SK-N-SH (cell line): ENCODE measurements at regions of chr3 and their contacts with region 1.

Region 1: DNA sequence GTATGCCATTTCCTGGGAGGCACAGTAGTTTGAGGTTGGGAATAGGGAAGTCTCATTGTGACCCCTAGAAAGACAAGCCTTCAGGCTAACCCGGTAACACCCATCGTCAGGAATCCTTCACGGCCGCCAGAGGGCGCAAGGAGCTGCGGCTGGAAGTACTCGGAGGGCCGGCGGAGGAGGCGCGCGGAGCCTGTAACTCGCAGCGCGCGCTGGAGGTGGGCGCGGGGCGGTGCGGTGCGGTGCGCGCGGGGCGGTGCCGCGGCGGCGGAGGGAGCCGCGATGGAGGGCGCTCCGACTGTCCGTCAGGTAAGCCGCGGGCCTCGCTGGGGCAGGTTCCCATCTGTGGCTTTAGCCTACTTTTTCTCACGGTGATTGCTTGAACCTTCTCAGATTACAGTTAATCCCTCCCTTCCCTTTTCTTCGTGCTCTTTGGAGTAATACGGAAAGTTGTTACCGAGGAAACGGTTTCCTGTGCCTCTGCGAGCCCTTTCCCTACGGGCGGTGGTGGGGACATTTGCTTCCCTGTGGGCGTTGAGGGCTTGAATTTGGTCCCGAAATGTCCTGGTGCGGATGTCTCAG is at the start of gene GRAMD1C:
- DNase-seq: peak; percentile 91
- H3K4me3 ChIP-seq: peak within 1 kb of the TSS; percentile 57 to 81
- H3K27ac ChIP-seq: peak within 1 kb of the TSS in 1 of 2 experiments; percentile 43; a peak in 2 of 4 replicates
- H3K4me1 ChIP-seq: no peaks in the 10 kb centered on the region; a peak in 1 of 4 replicates
- H3K27me3 ChIP-seq: no peaks in the 10 kb centered on the region
- CTCF ChIP-seq: peak; percentile 94
- EP300 ChIP-seq: no peak
- RAD21 ChIP-seq: peak; percentile 70
- polyA plus RNA-seq, gene GRAMD1C: 1.2 and 1.3 TPM in 2 replicates

Region 2: DNA sequence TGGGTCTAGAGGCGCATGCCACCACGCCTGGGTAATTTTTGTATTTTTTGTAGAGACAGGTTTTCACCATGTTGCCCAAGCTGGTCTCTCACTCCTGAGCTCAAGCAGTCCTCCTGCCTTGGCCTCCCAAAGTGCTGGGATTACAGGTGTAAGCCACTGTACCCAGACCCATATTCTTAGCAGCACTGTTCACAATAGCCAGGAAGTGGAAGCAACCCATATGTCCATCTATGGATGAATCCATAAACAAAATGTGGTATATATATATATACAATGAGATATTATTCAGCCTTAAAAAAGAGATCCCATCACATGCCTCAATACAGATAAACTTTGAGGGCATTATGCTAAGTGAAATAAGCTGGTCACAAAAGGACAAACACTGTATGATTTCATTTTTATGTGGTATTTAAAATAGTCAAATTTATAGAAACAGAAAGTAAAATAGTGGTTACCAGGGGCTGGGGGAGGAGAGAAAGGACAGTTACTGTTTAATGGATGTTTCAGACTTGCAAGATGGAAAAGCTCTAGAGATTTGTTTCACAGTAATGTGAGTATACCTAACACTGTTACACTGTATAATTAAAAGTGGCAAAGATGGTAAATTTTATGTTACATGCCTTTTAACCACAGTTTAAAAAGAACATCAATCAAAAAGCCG is 35.8 kb before region 1 on chr3:
- CTCF ChIA-PET with region 1: no interaction called
- POLR2A ChIA-PET with region 1: no interaction called
- DNase-seq: no peak
- H3K4me3 ChIP-seq: no peak overlapping the region
- H3K27ac ChIP-seq: no peak overlapping the region
- H3K4me1 ChIP-seq: no peaks in the 10 kb centered on the region
- H3K27me3 ChIP-seq: no peaks in the 10 kb centered on the region
- CTCF ChIP-seq: no peak
- EP300 ChIP-seq: no peak
- RAD21 ChIP-seq: no peak

Region 3: DNA sequence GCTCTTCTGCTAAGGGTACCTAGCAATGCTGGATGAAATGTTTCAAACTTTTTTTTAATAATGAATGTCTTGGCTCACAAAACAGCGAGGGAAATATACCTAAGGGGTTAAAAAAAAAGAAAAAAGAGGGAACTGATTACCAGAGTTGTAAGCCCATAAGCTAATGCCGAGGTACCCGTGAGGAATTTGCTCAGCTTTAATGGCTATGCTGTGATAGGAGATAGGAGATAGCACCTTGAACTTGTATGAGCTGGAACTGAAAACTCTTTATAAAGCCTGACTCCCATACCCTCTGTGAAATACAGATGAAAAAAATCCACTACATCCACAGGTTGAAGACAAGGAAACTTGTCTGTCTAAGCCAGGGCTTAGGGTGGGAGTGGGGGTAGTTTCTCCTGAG is 13.8 kb after region 1 on chr3:
- CTCF ChIA-PET with region 1: interaction called, 22 read pairs
- POLR2A ChIA-PET with region 1: no interaction called
- DNase-seq: no peak
- H3K4me3 ChIP-seq: no peak overlapping the region
- H3K27ac ChIP-seq: no peak overlapping the region
- H3K4me1 ChIP-seq: no peaks in the 10 kb centered on the region
- H3K27me3 ChIP-seq: no peaks in the 10 kb centered on the region
- CTCF ChIP-seq: no peak
- EP300 ChIP-seq: no peak
- RAD21 ChIP-seq: no peak

Region 4: DNA sequence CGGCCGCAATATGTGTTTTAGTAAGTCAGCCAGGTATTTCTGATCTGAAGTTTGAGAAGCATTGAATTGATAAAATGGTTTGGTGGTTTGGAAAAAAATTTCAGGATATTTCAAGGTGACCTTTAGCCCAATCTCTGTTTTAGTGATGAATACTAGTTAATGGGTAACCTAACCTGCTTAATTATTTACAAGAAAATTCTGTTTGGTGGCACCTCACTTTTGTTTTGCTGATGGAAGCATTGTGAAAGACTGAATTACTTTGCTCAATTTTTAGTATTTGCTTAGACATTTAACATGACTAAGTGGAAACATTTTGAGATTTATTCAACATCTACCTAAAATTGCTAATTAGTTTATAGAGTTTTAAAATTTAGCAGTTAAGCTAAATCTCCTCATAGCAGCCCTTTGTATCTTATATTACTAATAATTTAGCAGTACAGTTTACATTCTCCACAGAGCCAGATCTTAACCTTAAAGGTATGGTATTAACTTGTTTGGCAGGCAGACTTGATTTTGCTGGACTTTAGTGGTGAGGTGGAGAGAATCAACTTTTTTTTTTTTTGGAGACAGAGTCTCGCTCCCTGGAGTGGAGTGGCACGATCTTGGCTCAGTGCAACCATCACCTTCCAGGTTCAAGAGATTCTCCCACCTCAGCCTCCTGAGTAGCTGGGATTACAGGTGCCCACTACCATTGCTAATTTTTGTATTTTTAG is 35.2 kb after region 1 on chr3:
- CTCF ChIA-PET with region 1: no interaction called
- POLR2A ChIA-PET with region 1: no interaction called
- DNase-seq: no peak
- H3K4me3 ChIP-seq: no peak overlapping the region
- H3K27ac ChIP-seq: no peak overlapping the region
- H3K4me1 ChIP-seq: no peaks in the 10 kb centered on the region
- H3K27me3 ChIP-seq: no peaks in the 10 kb centered on the region
- CTCF ChIP-seq: no peak
- EP300 ChIP-seq: no peak
- RAD21 ChIP-seq: no peak